ENCODE measurements at regions of chr10 and their contacts with region 1.

Region 1: GRCh38 chr10:27223964-27224363 is 16.6 kb downstream of the ACBD5 start:
- DNase-seq: peak; percentile 46
- ATAC-seq: peak; percentile 77
- H3K4me3 ChIP-seq: no peak overlapping the region
- H3K27ac ChIP-seq: no peak overlapping the region
- H3K4me1 ChIP-seq: no peaks in the 10 kb centered on the region
- H3K27me3 ChIP-seq: no peaks in the 10 kb centered on the region
- CTCF ChIP-seq: peak; percentile 62
- EP300 ChIP-seq: no peak
- POLR2A ChIP-seq: no peak
- RAD21 ChIP-seq: no peak

Region 2: GRCh38 chr10:27285108-27285507 is 61.1 kb after region 1 on chr10:
- CTCF ChIA-PET with region 1: interaction called, 3 read pairs
- POLR2A ChIA-PET with region 1: no interaction called
- in situ Hi-C with region 1: no loop called
- intact Hi-C with region 1: loop called (anchors 1 kb)
- DNase-seq: peak; percentile 6
- ATAC-seq: peak; percentile 48; the same call in 2 of the 3 replicates
- H3K4me3 ChIP-seq: no peak overlapping the region
- H3K27ac ChIP-seq: no peak overlapping the region
- H3K4me1 ChIP-seq: no peaks in the 10 kb centered on the region
- H3K27me3 ChIP-seq: no peaks in the 10 kb centered on the region
- CTCF ChIP-seq: peak; percentile 49
- EP300 ChIP-seq: no peak
- POLR2A ChIP-seq: no peak
- RAD21 ChIP-seq: no peak

Region 3: DNA sequence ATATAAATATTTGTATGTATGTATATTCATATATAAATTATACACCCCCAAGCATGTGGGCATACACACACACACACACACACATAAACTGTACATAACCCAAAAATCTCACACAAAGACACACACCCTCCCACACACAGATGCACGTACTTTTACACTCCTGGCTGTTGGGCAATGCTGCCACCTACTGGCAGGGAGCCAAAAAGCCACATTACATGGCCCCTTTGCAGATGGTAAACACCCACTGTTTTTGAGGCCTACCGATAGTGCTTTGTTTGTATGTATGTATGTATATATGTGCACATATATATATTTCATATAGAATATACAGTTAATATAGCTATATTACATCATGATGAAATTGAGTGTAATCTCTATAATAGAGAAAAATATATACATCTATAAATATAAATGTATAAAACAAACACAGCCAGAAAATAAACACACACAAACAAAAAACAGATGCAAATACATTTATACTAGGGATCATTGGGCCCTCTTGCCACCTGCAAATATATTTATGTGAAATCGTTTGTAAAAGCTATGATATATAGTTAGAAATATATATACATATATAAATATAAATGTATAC is 136.7 kb after region 1 on chr10:
- CTCF ChIA-PET with region 1: interaction called, 26 read pairs
- POLR2A ChIA-PET with region 1: no interaction called
- in situ Hi-C with region 1: loop called (anchors 10 kb)
- intact Hi-C with region 1: loop called (anchors 1 kb)
- DNase-seq: peak; percentile 64
- ATAC-seq: peak; percentile 89
- H3K4me3 ChIP-seq: no peak overlapping the region
- H3K27ac ChIP-seq: no peak overlapping the region
- H3K4me1 ChIP-seq: no peaks in the 10 kb centered on the region
- H3K27me3 ChIP-seq: no peaks in the 10 kb centered on the region; a peak in 1 of 5 replicates
- CTCF ChIP-seq: peak; percentile 93
- EP300 ChIP-seq: no peak
- POLR2A ChIP-seq: no peak
- RAD21 ChIP-seq: peak; percentile 74

Measured in HepG2 (cell line).